ENCODE measurements at regions of chr9 and their contacts with region 1.

Region 1: DNA sequence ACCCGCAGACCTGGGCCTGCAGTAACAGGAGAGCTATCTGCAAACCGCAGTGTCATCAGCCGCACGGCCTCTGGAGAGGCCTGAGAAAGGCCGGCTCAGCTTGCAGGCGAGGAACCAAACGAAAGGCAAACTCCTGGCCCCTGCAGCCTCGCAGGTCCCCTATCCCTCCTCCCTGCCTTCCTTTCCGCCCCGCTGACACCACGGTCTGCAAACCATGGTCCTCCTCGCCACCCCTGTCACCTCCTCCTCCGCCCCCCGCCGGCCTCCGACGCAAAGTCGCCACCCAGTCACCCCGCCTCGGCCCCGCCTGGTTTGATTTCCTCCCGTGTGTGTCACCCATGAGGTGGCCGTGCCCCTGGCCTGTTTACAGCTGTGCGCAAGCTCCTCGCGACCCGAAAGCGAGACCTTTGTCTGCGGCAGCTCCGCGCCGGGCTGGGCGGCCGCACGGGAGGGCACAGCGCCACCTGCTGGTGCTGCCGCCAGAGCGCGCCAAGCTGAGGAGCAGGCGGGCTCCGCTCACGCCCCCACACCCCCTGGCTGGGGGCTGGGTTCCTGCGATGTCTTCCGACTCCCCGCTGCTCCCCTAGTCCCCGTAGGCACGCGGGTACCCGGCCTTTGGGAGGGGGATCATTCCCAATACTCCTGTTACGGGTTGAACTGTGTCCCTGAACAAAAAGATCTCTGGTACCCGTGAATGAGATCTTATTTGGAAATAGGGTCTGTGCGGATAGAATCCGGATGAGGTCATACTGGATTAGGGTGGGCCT is 19.4 kb downstream of the GBGT1 start:
- DNase-seq: peak; percentile 96
- H3K4me3 Mint-ChIP-seq: peak overlapping the region; percentile 57
- H3K27ac Mint-ChIP-seq: peak overlapping the region; percentile 65
- H3K4me1 Mint-ChIP-seq: peaks cover 59% of the 10 kb centered on the region
- H3K27me3 Mint-ChIP-seq: no peaks in the 10 kb centered on the region

Region 2: GRCh38 chr9:133030317-133031129 is 113.8 kb before region 1 on chr9 and contains the start of gene GTF3C5:
- CTCF ChIA-PET with region 1: interaction called, 15 read pairs
- intact Hi-C with region 1: loop called (anchors 1 kb)
- DNase-seq: peak; percentile 95
- H3K4me3 Mint-ChIP-seq: peak within 1 kb of the TSS; percentile 98
- H3K27ac Mint-ChIP-seq: peak within 1 kb of the TSS; percentile 98
- H3K4me1 Mint-ChIP-seq: peaks cover 42% of the 10 kb centered on the region
- H3K27me3 Mint-ChIP-seq: no peaks in the 10 kb centered on the region
- total RNA-seq, gene GTF3C5: 102 to 108 TPM

Region 3: DNA sequence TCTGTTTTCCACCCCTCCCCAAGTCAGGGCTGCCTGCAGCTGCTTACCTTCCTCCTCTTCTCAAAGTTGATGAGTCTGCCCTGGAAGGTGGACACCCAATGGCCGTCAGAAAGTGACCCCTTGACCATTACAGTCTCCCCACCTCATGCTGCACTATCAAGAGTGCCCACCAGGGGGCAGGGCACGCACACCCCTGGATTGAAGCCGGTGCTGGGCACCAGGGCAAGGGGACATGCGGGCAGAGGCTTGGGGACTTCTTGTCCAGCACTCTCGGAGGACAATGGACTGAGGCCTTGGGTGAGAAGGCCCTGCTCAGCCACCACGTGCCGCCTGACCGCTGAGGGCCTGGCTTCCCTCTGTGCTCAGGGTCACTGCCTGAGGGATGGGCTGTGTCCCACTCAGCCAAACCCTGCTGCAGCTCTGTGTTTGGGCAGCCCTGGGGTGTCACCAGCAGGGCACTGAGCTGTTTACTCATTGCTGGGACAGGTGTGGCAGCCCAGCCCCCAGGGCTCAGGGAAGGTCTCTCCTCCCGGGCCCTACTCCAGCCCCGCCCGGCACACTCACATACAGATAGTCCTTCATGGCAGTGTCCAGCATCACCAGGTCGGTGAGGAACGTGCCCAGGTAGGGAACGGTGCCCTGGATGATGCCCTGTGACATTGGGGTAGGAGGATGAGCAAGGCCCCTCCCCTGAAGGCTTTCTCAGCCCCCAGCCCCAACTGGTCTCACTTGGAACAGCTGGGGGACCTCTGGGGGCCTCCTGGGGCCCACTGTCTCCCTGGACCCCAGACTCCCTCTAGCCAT is 40.9 kb before region 1 on chr9:
- CTCF ChIA-PET with region 1: interaction called, 26 read pairs
- intact Hi-C with region 1: loop called (anchors 1 kb)
- DNase-seq: peak; percentile 62
- H3K4me3 Mint-ChIP-seq: no peak overlapping the region
- H3K27ac Mint-ChIP-seq: peak overlapping the region; percentile 41
- H3K4me1 Mint-ChIP-seq: no peaks in the 10 kb centered on the region
- H3K27me3 Mint-ChIP-seq: no peaks in the 10 kb centered on the region

Region 4: DNA sequence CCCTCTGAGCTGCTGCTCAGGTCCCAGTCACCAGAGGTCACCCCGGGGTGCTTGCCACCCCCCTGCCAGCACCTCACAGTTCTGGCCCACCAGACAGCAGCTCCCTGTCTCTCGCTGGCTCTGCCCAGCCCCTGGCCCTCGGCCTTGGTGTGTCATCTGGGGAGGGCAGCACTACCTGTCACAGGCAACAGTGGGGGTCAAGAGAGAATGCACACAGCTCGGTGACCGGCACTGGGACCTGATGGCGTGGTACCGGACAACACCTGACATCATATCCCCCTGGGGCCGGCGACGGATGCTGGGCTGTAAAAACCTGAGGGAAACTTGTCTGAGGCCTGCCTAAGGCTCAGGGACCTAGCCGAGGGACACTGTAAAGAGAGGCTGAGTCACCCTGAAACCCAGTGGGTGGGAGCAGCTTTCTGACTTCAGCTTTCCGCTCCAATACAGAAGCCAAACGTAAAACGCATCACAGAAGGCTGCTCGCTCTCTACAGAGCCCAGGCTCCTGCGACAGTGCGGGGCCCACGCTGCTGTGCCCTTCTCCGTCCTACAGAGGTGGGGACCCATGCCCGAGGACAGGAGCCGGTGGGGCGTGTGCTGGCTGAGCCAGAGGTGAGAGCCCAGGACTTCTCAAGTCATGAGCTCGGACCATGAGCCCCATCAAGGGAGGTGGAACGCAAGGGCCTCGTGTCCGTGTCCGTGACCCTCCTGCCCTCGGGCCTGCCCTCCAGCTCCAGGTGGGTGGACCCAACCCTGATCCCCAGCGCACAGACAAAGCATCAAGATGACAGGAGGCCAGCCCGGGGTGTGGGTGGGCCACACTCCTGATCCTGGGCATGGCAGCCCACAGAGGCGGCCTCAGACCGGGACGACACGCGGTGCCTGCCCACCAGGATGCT is 28.6 kb before region 1 on chr9:
- CTCF ChIA-PET with region 1: interaction called, 85 read pairs
- intact Hi-C with region 1: no loop called
- DNase-seq: peak; percentile 87
- H3K4me3 Mint-ChIP-seq: peak overlapping the region; percentile 19
- H3K27ac Mint-ChIP-seq: peak overlapping the region; percentile 82
- H3K4me1 Mint-ChIP-seq: peaks cover 59% of the 10 kb centered on the region
- H3K27me3 Mint-ChIP-seq: no peaks in the 10 kb centered on the region

Region 5: DNA sequence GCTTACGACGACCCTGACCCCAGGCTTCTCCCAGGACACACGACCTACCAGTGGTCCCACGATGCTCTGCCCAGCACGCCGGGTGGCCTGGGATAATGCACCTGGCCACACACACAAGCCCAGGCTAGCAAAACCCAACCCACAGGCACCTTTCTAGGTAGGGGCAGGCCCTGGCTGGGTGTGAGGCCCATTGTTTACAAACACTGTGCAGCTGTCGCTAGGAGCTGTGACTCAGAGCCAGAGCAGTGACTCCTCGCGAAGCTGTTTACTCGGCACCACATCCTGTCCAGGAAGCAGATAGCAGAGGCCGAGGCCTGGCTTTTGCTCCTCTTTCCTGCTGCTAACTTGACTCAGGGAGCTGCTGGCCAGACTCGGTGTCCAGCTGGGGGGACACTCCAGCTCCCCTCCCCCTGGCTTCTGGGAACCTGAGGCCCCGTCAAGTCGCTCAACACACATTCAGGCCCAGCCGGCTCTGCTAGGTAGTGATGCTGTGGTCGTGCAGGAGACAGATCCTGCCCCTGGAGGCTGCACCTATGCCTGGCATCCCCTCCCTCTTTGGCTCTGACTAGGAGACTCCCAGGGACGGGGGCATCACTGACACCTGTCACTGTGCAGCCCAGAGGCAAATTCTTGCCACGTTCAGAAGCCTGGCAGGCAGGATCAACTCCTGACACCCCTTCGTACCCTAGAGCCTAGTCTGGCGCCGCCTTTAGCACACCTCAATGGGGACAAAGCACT is 10.5 kb before region 1 on chr9:
- CTCF ChIA-PET with region 1: interaction called, 31 read pairs
- intact Hi-C with region 1: loop called (anchors 1 kb)
- DNase-seq: peak; percentile 96
- H3K4me3 Mint-ChIP-seq: peak overlapping the region; percentile 38
- H3K27ac Mint-ChIP-seq: peak overlapping the region; percentile 96
- H3K4me1 Mint-ChIP-seq: peaks cover 70% of the 10 kb centered on the region
- H3K27me3 Mint-ChIP-seq: no peaks in the 10 kb centered on the region